SK-N-SH (cell line): ENCODE measurements at regions of chr21 and their contacts with region 1.

Region 1: GRCh38 chr21:37463083-37463801 is 96.7 kb downstream of the DYRK1A start:
- DNase-seq: peak; percentile 33
- H3K4me3 ChIP-seq: peak overlapping the region in 1 of 2 experiments; percentile 7; a peak in 1 of 4 replicates
- H3K27ac ChIP-seq: peak overlapping the region; percentile 17 to 20; a peak in 2 of 4 replicates
- H3K4me1 ChIP-seq: peaks cover 20 to 26% of the 10 kb centered on the region in 2 experiments
- H3K27me3 ChIP-seq: no peaks in the 10 kb centered on the region
- CTCF ChIP-seq: peak; percentile 72
- EP300 ChIP-seq: no peak
- RAD21 ChIP-seq: peak; percentile 58

Region 2: DNA sequence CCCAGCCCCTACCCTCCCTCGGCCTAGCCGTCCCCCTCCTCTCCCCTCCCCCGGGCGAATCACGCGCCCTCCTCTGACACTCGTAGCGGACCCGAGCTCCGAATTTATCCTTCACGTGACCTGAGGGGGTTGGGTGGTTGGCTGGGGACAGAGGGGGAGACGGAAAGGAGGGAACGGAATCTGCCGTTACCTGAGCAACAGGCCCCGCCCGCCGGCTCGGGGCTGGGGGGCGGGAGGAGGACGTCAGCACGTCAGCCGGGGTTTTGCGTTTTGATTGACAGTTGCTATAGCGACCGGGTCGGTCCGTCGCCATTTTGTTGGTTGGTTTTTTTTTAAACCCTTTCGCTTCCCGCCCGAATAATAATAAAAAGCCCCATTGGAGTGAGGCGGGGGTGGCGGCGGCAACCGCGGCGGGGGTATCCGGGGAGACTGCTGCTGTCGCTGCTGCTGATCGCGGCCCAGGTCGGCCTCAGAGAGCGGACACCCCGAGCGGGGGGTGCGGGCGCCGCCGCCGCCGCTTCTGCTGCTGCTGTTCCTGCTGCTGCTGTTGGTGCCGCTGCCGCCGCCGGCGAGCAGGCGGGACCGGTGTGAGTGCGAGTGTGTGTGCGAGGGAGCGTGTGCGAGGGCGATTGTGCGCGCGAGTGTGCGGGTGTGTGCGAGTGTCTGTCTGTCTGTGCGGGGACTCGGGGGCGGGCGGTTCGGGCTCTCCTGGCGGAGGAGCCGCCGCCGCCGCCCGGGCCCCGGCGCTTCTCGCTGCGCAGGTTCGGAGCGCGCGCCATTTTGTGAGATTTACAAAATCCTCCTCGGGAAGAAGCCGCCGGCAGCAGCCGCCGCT is 96.5 kb before region 1 on chr21 and contains the start of gene DYRK1A:
- CTCF ChIA-PET with region 1: interaction called, 20 read pairs
- POLR2A ChIA-PET with region 1: no interaction called
- DNase-seq: peak; percentile 97
- H3K4me3 ChIP-seq: peak within 1 kb of the TSS; percentile 90 to 92
- H3K27ac ChIP-seq: peak within 1 kb of the TSS; percentile 98
- H3K4me1 ChIP-seq: peaks cover 24% of the 10 kb centered on the region in 2 experiments; a peak in 3 of 4 replicates
- H3K27me3 ChIP-seq: no peaks in the 10 kb centered on the region
- CTCF ChIP-seq: 0 out of 2 replicates have a peak, but pooled peaks have one; percentile 9
- EP300 ChIP-seq: no peak; a peak in 1 of 4 replicates
- RAD21 ChIP-seq: no peak
- polyA plus RNA-seq, gene DYRK1A: 19.3 and 21.5 TPM in 2 replicates

Region 3: GRCh38 chr21:37475186-37475868 is 12.1 kb after region 1 on chr21:
- CTCF ChIA-PET with region 1: interaction called, 26 read pairs
- POLR2A ChIA-PET with region 1: no interaction called
- DNase-seq: no peak
- H3K4me3 ChIP-seq: no peak overlapping the region
- H3K27ac ChIP-seq: no peak overlapping the region
- H3K4me1 ChIP-seq: peaks cover 0 to 17% of the 10 kb centered on the region in 2 experiments; a peak in 2 of 4 replicates
- H3K27me3 ChIP-seq: no peaks in the 10 kb centered on the region
- CTCF ChIP-seq: no peak
- EP300 ChIP-seq: no peak
- RAD21 ChIP-seq: no peak